ENCODE measurements at regions of chr9 and their contacts with region 1.

Region 1: DNA sequence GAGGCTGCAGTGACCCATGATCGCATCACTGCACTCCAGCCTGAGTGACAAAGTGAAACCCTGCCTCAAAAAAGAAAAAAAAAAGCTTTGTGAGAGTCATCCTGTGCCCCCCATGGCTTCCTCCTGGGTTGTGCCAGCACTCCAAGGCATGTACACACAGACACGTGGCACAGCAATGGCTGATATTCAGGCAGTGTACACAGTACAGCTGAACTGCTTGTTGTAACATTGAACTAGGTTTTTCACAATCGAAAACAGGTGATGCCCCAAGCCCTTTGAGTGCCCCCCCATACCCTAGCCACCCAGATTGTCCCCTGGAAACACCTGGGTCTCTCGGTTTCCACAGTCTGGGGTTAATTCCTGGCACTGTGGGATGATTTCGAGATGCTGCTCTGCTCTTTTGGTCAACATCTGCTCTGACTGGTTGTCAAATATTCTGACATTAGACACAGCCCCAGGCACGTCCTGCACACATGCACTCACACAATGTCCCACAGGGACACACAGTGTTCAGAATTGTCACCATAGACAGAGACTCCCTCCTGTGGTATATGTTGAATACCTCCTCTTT is 9.2 kb downstream of the SPINK4 start:
- DNase-seq: no peak
- H3K4me3 Mint-ChIP-seq: no peak overlapping the region
- H3K27ac Mint-ChIP-seq: no peak overlapping the region
- H3K4me1 Mint-ChIP-seq: peaks cover 7% of the 10 kb centered on the region
- H3K27me3 Mint-ChIP-seq: no peaks in the 10 kb centered on the region

Region 2: GRCh38 chr9:33233681-33234473 is 15.3 kb before region 1 on chr9:
- CTCF ChIA-PET with region 1: interaction called, 13 read pairs
- POLR2A ChIA-PET with region 1: no interaction called
- DNase-seq: no peak
- H3K4me3 Mint-ChIP-seq: no peak overlapping the region
- H3K27ac Mint-ChIP-seq: no peak overlapping the region
- H3K4me1 Mint-ChIP-seq: no peaks in the 10 kb centered on the region
- H3K27me3 Mint-ChIP-seq: peaks cover 2% of the 10 kb centered on the region

Measured in activated CD4-positive, alpha-beta T cell treated with anti-CD3 and anti-CD28 coated beads, Interleukin-2, amount 10 ng/mL, durations not matched to agents 7 days and 5 days (primary cell).